ENCODE measurements at regions of chrX and their contacts with region 1.

Region 1: GRCh38 chrX:56802921-56803849 is 74.1 kb downstream of the NBDY start:
- DNase-seq: peak; percentile 73
- ATAC-seq: peak; percentile 85
- H3K4me3 ChIP-seq: no peak overlapping the region
- H3K27ac ChIP-seq: no peak overlapping the region
- H3K4me1 ChIP-seq: no peaks in the 10 kb centered on the region
- H3K27me3 ChIP-seq: no peaks in the 10 kb centered on the region
- CTCF ChIP-seq: peak; percentile 75

Region 2: GRCh38 chrX:56978172-56978571 is 175.0 kb after region 1 on chrX:
- CTCF ChIA-PET with region 1: no interaction called
- POLR2A ChIA-PET with region 1: no interaction called
- intact Hi-C with region 1: loop called (anchors 1 kb)
- DNase-seq: peak; percentile 73
- ATAC-seq: peak; percentile 81
- H3K4me3 ChIP-seq: no peak overlapping the region
- H3K27ac ChIP-seq: no peak overlapping the region
- H3K4me1 ChIP-seq: peaks cover 4% of the 10 kb centered on the region
- H3K27me3 ChIP-seq: no peaks in the 10 kb centered on the region
- CTCF ChIP-seq: peak; percentile 76